ENCODE measurements at regions of chr19 and their contacts with region 1.

Region 1: GRCh38 chr19:19663256-19664038 is at the start of gene ATP13A1:
- DNase-seq: peak; percentile 95 to 98 (median 96)
- H3K4me3 ChIP-seq: peak within 1 kb of the TSS; percentile 78 to 89
- H3K4me3 Mint-ChIP-seq: peak within 1 kb of the TSS; percentile 92 to 96 (median 93)
- H3K27ac ChIP-seq: peak within 1 kb of the TSS; percentile 89
- H3K27ac Mint-ChIP-seq: peak within 1 kb of the TSS; percentile 95 to 99 (median 98)
- H3K4me1 ChIP-seq: peaks cover 58% of the 10 kb centered on the region
- H3K4me1 Mint-ChIP-seq: peaks cover 24 to 51% (median 38%) of the 10 kb centered on the region in 4 donors
- H3K27me3 ChIP-seq: no peaks in the 10 kb centered on the region
- H3K27me3 Mint-ChIP-seq: no peaks in the 10 kb centered on the region
- total RNA-seq, gene ATP13A1: 137 to 139 TPM

Region 2: GRCh38 chr19:19160461-19161035 is 502.9 kb before region 1 on chr19:
- CTCF ChIA-PET with region 1: no interaction called
- POLR2A ChIA-PET with region 1: no interaction called
- intact Hi-C with region 1: no loop called
- DNase-seq: no peak
- H3K4me3 ChIP-seq: no peak overlapping the region
- H3K4me3 Mint-ChIP-seq: no peak overlapping the region
- H3K27ac ChIP-seq: no peak overlapping the region
- H3K27ac Mint-ChIP-seq: no peak overlapping the region
- H3K4me1 ChIP-seq: no peaks in the 10 kb centered on the region
- H3K4me1 Mint-ChIP-seq: peaks cover 0 to 2% (median under 1%) of the 10 kb centered on the region in 4 donors
- H3K27me3 ChIP-seq: no peaks in the 10 kb centered on the region
- H3K27me3 Mint-ChIP-seq: no peaks in the 10 kb centered on the region

Region 3: GRCh38 chr19:19531951-19532805 is 131.3 kb before region 1 on chr19:
- CTCF ChIA-PET with region 1: interaction called, 9 read pairs
- POLR2A ChIA-PET with region 1: interaction called, 13 read pairs
- intact Hi-C with region 1: no loop called
- DNase-seq: peak; percentile 78 to 85 (median 80)
- H3K4me3 ChIP-seq: no peak overlapping the region
- H3K4me3 Mint-ChIP-seq: peak overlapping the region in 1 of 8 donors; percentile 20
- H3K27ac ChIP-seq: peak overlapping the region; percentile 24
- H3K27ac Mint-ChIP-seq: peak overlapping the region in 6 of 7 donors; percentile 64 to 91 (median 86)
- H3K4me1 ChIP-seq: peaks cover 12% of the 10 kb centered on the region
- H3K4me1 Mint-ChIP-seq: peaks cover 3 to 28% (median 13%) of the 10 kb centered on the region in 4 donors
- H3K27me3 ChIP-seq: no peaks in the 10 kb centered on the region
- H3K27me3 Mint-ChIP-seq: no peaks in the 10 kb centered on the region

Region 4: GRCh38 chr19:19606021-19606420 is 57.4 kb before region 1 on chr19:
- CTCF ChIA-PET with region 1: interaction called, 4 read pairs
- POLR2A ChIA-PET with region 1: interaction called, 41 read pairs
- intact Hi-C with region 1: no loop called
- DNase-seq: peak; percentile 61 to 91 (median 73)
- H3K4me3 ChIP-seq: no peak overlapping the region
- H3K4me3 Mint-ChIP-seq: peak overlapping the region; percentile 22 to 90 (median 74)
- H3K27ac ChIP-seq: peak overlapping the region; percentile 69
- H3K27ac Mint-ChIP-seq: peak overlapping the region; percentile 95 to 99 (median 97)
- H3K4me1 ChIP-seq: peaks cover 57% of the 10 kb centered on the region
- H3K4me1 Mint-ChIP-seq: peaks cover 46 to 69% (median 58%) of the 10 kb centered on the region in 4 donors
- H3K27me3 ChIP-seq: no peaks in the 10 kb centered on the region
- H3K27me3 Mint-ChIP-seq: no peaks in the 10 kb centered on the region

Region 5: DNA sequence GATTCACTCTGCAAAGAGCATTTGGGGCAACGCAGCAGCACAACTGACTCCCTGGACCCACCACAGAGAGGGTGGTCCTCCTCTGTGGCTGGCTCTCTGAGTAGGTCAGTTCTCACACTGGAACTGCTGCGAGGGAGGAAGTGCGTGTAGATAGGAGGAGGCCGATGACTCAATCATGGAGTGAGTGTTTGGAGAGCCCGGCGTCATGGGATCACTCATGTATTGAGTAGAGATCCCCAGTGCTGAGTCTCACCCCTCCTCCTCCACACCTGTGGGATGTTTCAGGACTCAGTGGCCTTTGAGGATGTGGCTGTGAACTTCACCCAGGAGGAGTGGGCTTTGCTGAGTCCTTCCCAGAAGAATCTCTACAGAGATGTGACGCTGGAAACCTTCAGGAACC is 14.1 kb after region 1 on chr19:
- CTCF ChIA-PET with region 1: interaction called, 3 read pairs
- POLR2A ChIA-PET with region 1: interaction called, 11 read pairs
- intact Hi-C with region 1: no loop called
- DNase-seq: no peak
- H3K4me3 ChIP-seq: peak overlapping the region in 1 of 2 donors; percentile 25
- H3K4me3 Mint-ChIP-seq: peak overlapping the region in 5 of 8 donors; percentile 7 to 46 (median 29)
- H3K27ac ChIP-seq: no peak overlapping the region
- H3K27ac Mint-ChIP-seq: peak overlapping the region in 3 of 7 donors; percentile 46 to 56 (median 48)
- H3K4me1 ChIP-seq: no peaks in the 10 kb centered on the region
- H3K4me1 Mint-ChIP-seq: peaks cover 2 to 33% (median 23%) of the 10 kb centered on the region in 4 donors
- H3K27me3 ChIP-seq: no peaks in the 10 kb centered on the region
- H3K27me3 Mint-ChIP-seq: no peaks in the 10 kb centered on the region

Region 6: DNA sequence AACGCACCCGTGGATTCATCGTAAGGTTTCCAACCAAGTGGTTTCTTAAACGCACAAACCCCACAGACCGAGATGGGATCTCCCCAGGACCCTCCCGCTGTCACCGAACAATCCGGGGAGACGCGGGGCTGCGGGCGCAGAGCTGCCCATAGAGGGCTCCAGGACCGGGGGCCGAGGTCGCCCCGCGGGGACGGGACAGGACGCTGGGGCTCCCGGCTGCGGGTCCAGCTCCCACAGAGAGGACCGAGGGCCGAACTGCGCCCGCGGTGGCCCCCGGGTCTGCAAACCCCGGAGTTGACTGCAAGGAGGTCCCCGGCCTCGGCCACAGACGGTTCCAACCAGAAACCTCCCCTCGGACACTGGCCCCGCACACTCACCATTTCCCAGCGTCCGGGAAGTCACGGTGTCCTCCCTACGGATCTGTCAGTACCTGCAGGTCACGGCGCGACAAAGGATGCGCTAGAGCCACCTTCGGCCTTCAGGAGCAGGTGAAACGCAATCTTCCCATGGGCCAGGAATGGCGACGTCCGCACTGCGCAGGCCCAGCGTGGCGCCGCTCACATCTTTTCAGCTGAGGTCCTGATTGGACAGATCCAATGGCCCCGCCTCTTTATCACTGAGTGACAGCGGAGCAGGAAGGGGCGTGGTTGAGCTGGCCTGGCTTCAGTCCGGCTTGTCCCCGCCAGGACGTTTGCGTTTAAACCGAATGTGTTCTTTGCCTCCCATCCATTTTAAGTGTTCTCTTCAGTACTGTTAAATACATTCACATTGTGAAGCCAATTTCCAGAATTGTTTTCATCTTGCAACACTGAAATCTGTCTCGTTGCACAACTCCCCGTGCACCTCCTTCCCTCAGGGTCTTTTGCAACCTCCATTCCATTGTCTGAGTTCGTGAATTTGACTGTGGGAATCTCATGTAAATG is 69.4 kb after region 1 on chr19 and contains the start of gene ZNF14:
- CTCF ChIA-PET with region 1: interaction called, 6 read pairs
- POLR2A ChIA-PET with region 1: interaction called, 127 read pairs
- intact Hi-C with region 1: loop called (anchors 1 kb)
- DNase-seq: peak; percentile 87 to 94 (median 88)
- H3K4me3 ChIP-seq: peak within 1 kb of the TSS; percentile 59 to 81
- H3K4me3 Mint-ChIP-seq: peak within 1 kb of the TSS; percentile 95 to 100 (median 98)
- H3K27ac ChIP-seq: peak within 1 kb of the TSS; percentile 72
- H3K27ac Mint-ChIP-seq: peak within 1 kb of the TSS; percentile 93 to 99 (median 98)
- H3K4me1 ChIP-seq: peaks cover 18% of the 10 kb centered on the region
- H3K4me1 Mint-ChIP-seq: peaks cover 11 to 40% (median 24%) of the 10 kb centered on the region in 4 donors
- H3K27me3 ChIP-seq: no peaks in the 10 kb centered on the region
- H3K27me3 Mint-ChIP-seq: no peaks in the 10 kb centered on the region
- total RNA-seq, gene ZNF14: 31.2 to 32.2 TPM

Region 7: GRCh38 chr19:19865739-19866481 is 202.5 kb after region 1 on chr19 and contains the start of gene ZNF253:
- CTCF ChIA-PET with region 1: no interaction called
- POLR2A ChIA-PET with region 1: interaction called, 84 read pairs
- intact Hi-C with region 1: loop called (anchors 1 kb)
- DNase-seq: peak; percentile 91 to 97 (median 91)
- H3K4me3 ChIP-seq: peak within 1 kb of the TSS; percentile 92
- H3K4me3 Mint-ChIP-seq: peak within 1 kb of the TSS; percentile 99 to 100 (median 100)
- H3K27ac ChIP-seq: peak within 1 kb of the TSS; percentile 75
- H3K27ac Mint-ChIP-seq: peak within 1 kb of the TSS; percentile 98 to 99 (median 98)
- H3K4me1 ChIP-seq: peaks cover 30% of the 10 kb centered on the region
- H3K4me1 Mint-ChIP-seq: peaks cover 18 to 50% (median 29%) of the 10 kb centered on the region in 4 donors
- H3K27me3 ChIP-seq: no peaks in the 10 kb centered on the region
- H3K27me3 Mint-ChIP-seq: no peaks in the 10 kb centered on the region
- total RNA-seq, gene ZNF253: 23.8 to 25.8 TPM